ENCODE measurements at regions of chr13 and their contacts with region 1.

Region 1: GRCh38 chr13:20420938-20421337 is 104.7 kb downstream of the CRYL1 start:
- DNase-seq: no peak
- H3K4me3 Mint-ChIP-seq: no peak overlapping the region
- H3K27ac Mint-ChIP-seq: peak overlapping the region; percentile 14
- H3K4me1 Mint-ChIP-seq: peaks cover 39% of the 10 kb centered on the region
- H3K27me3 Mint-ChIP-seq: no peaks in the 10 kb centered on the region

Region 2: GRCh38 chr13:20188667-20189553 is 232.0 kb before region 1 on chr13:
- CTCF ChIA-PET with region 1: no interaction called
- POLR2A ChIA-PET with region 1: no interaction called
- DNase-seq: no peak
- H3K4me3 Mint-ChIP-seq: no peak overlapping the region
- H3K27ac Mint-ChIP-seq: no peak overlapping the region
- H3K4me1 Mint-ChIP-seq: peaks cover 16% of the 10 kb centered on the region
- H3K27me3 Mint-ChIP-seq: peaks cover 33% of the 10 kb centered on the region

Region 3: GRCh38 chr13:20291037-20291436 is 129.9 kb before region 1 on chr13:
- CTCF ChIA-PET with region 1: no interaction called
- POLR2A ChIA-PET with region 1: no interaction called
- DNase-seq: no peak
- H3K4me3 Mint-ChIP-seq: no peak overlapping the region
- H3K27ac Mint-ChIP-seq: no peak overlapping the region
- H3K4me1 Mint-ChIP-seq: no peaks in the 10 kb centered on the region
- H3K27me3 Mint-ChIP-seq: peaks cover 7% of the 10 kb centered on the region

Region 4: DNA sequence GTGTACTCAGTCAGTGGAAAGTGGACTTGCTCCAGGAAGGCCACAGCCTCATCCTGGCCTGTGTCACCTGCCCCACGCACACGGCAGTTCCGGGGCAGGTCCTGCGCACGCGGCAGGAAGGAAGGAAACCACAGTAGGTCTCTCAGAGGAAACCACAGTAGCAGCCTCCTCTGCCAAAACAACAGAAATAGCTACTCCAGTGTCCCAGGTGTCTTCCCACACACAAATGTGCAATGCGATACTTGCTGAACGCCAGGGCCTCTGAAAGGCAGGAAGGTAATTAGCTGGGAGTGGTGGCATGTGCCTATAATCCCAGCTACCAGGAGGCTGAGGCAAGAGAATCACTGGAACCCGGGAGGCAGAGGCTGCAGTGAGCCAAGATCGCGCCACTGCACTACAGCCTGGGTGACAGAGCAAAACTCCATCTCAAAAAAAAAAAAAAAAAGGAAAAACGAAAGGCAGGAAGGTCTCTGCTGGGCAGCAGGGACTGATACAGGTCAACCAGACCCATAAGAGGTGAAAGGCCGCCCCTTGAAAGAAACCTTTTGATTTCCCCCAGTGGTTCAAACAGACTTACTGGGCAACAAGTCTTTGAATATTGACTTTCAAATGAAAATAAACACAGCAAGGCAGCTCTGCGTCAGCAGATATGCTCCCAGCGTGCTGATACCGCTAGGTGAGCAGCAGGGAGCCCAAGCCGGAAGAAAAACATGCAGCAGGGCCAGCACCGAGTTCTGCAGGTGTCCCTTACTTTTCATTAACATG is 55.2 kb after region 1 on chr13:
- CTCF ChIA-PET with region 1: interaction called, 3 read pairs
- POLR2A ChIA-PET with region 1: interaction called, 22 read pairs
- DNase-seq: peak; percentile 83
- H3K4me3 Mint-ChIP-seq: peak overlapping the region; percentile 69
- H3K27ac Mint-ChIP-seq: peak overlapping the region; percentile 97
- H3K4me1 Mint-ChIP-seq: peaks cover 36% of the 10 kb centered on the region
- H3K27me3 Mint-ChIP-seq: no peaks in the 10 kb centered on the region

Measured in activated CD4-positive, alpha-beta memory T cell treated with anti-CD3 and anti-CD28 coated beads, Interleukin-2, amount 10 ng/mL, durations not matched to agents 7 days and 5 days (primary cell).